ENCODE measurements at regions of chr11 and their contacts with region 1.

Region 1: DNA sequence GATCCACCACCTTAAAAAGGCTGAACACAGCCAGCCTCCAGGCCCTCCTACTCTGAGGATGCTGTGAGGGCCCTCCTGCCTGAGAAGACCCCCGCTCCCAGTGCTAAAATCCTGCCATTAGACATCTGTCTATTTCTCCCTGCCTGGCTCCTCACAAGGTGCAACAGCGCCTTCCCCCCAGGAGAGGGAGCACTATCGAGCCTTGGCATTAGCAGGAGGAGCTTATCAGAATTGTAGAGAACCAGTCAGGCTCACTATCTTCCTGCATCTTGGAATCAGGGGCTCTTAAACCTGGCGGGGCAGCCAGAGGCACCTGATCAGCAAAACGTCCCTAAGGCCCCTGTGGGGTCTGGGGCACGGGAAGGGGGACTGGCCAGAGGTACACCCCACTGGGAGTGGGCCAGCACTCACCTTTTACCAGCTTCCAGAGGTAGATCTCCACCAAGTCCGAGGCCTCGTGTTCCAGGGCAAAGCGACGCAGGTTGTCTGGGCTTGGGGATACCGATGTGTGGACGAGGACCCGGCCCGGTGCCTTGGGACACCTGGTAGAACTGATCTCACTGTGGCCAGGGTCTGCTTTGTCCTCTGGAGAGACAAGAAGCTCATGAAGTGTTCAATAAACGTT is 28.7 kb downstream of the CHRDL2 start:
- DNase-seq: peak; percentile 55 to 72
- H3K4me3 ChIP-seq: no peak overlapping the region
- H3K27ac ChIP-seq: no peak overlapping the region
- H3K4me1 ChIP-seq: no peaks in the 10 kb centered on the region
- H3K27me3 ChIP-seq: no peaks in the 10 kb centered on the region
- CTCF ChIP-seq: peak; percentile 98

Region 2: GRCh38 chr11:72930008-72930407 is 1772.5 kb before region 1 on chr11:
- CTCF ChIA-PET with region 1: no interaction called
- POLR2A ChIA-PET with region 1: no interaction called
- intact Hi-C with region 1: no loop called
- DNase-seq: no peak
- H3K4me3 ChIP-seq: no peak overlapping the region
- H3K27ac ChIP-seq: no peak overlapping the region
- H3K4me1 ChIP-seq: no peaks in the 10 kb centered on the region
- H3K27me3 ChIP-seq: no peaks in the 10 kb centered on the region
- CTCF ChIP-seq: no peak

Region 3: DNA sequence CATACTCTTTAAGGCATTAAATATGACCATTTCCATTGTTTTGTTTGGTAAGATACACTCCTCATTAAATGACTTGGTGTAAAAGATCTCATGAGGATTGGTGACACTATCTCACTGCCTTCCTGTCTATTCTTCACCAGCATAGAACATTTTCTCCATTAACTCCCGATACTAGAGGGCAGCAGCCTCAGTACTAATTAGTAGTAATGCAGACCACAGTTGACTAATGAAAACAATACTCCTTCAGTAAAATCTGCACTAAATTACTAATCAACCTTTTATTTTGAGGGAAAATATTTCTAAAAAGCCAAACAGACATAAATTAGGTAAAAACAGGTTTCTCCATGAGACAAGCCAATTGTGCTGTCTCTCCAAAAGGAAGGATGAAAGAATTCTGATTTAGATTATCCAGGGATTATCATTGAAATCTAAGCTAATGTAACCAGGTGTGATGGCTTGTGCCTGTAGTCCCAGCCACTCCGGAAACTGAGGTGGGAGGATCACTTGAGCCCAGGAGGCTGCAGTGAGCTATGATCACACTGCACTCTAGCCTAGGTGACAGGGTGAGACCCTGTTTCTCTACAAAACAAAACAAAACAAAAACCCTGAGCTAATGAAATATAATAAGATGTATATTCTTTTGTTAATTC is 313.7 kb before region 1 on chr11:
- CTCF ChIA-PET with region 1: interaction called, 12 read pairs
- POLR2A ChIA-PET with region 1: no interaction called
- intact Hi-C with region 1: no loop called
- DNase-seq: no peak
- H3K4me3 ChIP-seq: no peak overlapping the region
- H3K27ac ChIP-seq: no peak overlapping the region
- H3K4me1 ChIP-seq: no peaks in the 10 kb centered on the region
- H3K27me3 ChIP-seq: no peaks in the 10 kb centered on the region
- CTCF ChIP-seq: no peak

Region 4: DNA sequence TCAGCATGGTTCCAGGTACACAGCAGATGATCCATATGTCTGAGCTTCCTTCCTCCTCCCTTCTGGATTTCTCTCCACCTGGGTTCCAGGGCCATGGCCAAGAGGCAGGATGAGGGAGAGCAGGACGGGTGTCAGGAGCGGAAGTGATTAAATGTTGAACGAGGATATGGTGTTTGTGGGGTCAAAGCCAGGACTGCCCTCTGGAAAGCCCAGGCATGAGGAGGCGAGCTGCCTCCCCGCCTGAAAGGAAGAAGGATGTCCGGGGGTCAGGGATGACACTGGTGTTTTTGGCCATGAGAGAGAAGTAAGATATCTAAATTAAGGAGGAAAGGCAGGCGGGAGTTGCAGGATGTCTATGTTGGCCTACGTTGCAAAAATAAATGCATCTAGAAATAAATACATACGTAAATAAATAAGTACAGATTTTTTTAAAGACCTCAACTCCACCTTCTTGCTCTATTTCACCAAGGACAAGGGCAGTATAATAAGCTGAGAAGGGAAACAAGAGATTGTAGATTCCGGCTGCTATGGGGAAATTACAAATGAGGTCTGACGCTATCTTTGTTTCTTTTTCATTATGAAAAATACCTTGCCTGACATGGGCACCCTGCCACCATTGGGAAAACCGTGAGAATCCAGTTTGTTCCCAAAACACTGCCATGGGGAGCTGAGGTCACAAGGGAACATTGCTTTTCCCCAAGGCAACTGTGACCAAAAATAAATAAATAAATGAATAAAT is 181.4 kb before region 1 on chr11:
- CTCF ChIA-PET with region 1: no interaction called
- POLR2A ChIA-PET with region 1: no interaction called
- intact Hi-C with region 1: no loop called
- DNase-seq: no peak
- H3K4me3 ChIP-seq: no peak overlapping the region
- H3K27ac ChIP-seq: no peak overlapping the region
- H3K4me1 ChIP-seq: 0 out of 2 replicates have a peak, but pooled peaks cover 3% of the 10 kb centered on the region
- H3K27me3 ChIP-seq: no peaks in the 10 kb centered on the region
- CTCF ChIP-seq: no peak

Region 5: DNA sequence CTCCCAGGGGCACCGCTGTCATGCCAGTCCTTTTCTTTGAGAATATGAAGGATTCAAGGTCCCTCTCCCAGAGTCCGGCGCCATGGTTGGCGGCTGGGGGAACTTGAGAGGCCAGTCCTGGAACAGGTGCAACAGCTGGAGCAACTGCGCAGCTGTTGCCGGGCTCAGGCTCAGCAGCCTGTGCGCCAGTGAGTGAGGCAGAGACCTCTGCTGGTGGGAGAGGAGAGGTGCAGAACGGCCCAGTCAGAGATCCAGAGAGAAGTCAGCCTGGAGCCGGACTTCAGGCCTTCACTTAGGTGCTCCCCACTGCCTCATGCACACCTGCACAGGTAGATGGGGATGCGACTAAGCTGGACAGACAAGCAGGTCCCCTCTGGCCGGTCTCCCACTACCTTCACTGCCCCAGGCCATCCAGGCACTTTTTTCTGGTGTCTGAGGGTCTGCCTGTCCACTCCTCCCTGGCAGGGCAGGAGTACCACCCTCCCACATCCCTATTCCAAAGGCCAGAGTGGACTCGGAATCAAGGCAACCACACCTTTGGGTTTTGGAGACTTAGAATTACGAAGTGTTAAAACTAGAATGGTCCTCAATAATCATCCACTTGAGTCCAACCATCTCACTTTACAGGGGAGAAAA is 24.2 kb after region 1 on chr11:
- CTCF ChIA-PET with region 1: interaction called, 30 read pairs
- POLR2A ChIA-PET with region 1: no interaction called
- intact Hi-C with region 1: no loop called
- DNase-seq: peak; percentile 67 to 75
- H3K4me3 ChIP-seq: no peak overlapping the region
- H3K27ac ChIP-seq: no peak overlapping the region
- H3K4me1 ChIP-seq: no peaks in the 10 kb centered on the region
- H3K27me3 ChIP-seq: peaks cover 22% of the 10 kb centered on the region
- CTCF ChIP-seq: peak; percentile 96

Region 6: DNA sequence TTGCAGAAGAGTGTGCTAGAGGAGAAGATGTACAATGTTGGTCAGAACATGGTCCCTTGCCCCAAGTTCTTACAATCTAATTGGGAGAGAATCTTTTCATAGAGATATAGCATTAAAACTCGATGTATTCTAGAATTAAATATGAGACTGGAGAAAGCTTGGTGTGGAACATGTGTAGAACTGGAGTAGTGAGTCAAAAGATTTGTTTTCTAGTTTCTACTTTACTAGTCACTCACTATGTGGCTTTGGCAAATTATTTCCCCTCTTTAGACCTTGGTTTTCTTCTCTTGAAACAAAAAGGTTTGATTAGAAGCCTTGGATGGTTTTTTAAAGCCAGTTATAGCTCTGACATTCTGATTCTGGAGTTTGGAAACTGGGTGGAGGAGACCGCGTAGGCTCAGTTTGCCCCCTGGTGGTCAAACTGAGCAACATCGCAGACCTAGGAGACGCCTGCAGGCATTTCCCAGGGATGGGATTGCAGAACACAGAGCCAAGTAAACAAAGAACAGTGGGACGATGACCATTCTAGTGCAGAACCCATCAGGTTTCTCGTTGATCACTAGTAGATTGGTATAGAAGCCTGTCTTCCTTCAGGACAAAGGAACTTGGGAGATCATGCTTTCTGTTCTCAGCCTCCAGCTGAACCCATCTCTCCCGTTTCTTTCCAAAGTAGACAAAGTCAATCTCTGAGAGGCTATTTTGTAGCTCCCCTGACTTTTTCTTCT is 37.2 kb after region 1 on chr11:
- CTCF ChIA-PET with region 1: interaction called, 24 read pairs
- POLR2A ChIA-PET with region 1: no interaction called
- intact Hi-C with region 1: no loop called
- DNase-seq: peak; percentile 58 to 66
- H3K4me3 ChIP-seq: no peak overlapping the region
- H3K27ac ChIP-seq: no peak overlapping the region
- H3K4me1 ChIP-seq: 0 out of 2 replicates have a peak, but pooled peaks cover 4% of the 10 kb centered on the region
- H3K27me3 ChIP-seq: no peaks in the 10 kb centered on the region
- CTCF ChIP-seq: peak; percentile 98

Measured in PC-9 (cell line).